Gastrocnemius medialis (tissue), 4 donors: ENCODE measurements at regions of chr14 and their contacts with region 1.

Region 1: DNA sequence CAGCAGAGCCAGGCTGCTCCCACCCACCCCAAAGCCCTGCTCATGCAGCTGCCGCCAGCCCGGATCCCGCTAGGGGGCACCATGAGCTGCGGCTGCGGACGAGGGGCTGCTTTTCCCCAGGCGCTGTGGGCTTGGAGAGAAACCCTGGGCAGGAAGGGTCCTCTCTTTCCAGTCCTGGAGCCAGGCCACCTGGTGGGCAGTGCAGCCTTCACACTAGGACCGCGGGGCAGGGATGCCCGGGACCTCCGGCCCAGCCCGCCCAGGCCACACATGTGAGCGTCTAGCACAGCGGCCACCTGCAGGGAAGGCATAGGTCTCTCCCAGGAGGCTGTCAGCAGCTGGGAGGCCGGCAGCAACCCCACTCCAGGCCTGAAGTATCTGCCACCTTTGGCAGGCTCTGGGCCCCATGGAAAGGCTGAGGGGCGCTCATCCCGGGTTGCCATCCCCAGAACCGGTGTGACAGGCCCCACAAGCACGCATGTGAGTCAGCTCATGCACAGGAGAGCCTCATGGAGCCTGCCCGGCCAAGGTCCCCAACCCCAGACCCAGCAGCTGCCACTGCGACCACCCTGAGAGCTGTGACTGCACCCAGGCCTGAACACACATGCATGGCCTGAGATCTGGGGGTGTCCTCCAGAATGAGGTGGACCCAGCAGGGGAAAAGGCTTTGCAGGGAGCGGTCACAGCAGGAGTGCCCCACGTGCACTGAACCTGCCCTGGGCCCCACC is 280.0 kb upstream of the RTL1 start:
- DNase-seq: no peak
- ATAC-seq: no peak
- H3K4me3 ChIP-seq: no peak overlapping the region
- H3K27ac ChIP-seq: no peak overlapping the region
- H3K4me1 ChIP-seq: no peaks in the 10 kb centered on the region
- H3K27me3 ChIP-seq: no peaks in the 10 kb centered on the region
- CTCF ChIP-seq: peak in 1 of 5 experiments; percentile 25
- POLR2A ChIP-seq: no peak

Region 2: GRCh38 chr14:101559624-101560533 is 376.3 kb after region 1 on chr14:
- in situ Hi-C with region 1: no loop called
- intact Hi-C with region 1: loop called (anchors 2 kb)
- DNase-seq: no peak
- ATAC-seq: peak; percentile 42 to 48
- H3K4me3 ChIP-seq: peak overlapping the region in 3 of 4 donors; percentile 35 to 50 (median 45)
- H3K27ac ChIP-seq: peak overlapping the region; percentile 56 to 61 (median 59)
- H3K4me1 ChIP-seq: no peaks in the 10 kb centered on the region
- H3K27me3 ChIP-seq: peaks cover 41 to 75% (median 58%) of the 10 kb centered on the region in 3 donors
- CTCF ChIP-seq: no peak
- POLR2A ChIP-seq: no peak